ENCODE measurements at regions of chr14 and their contacts with region 1.

Region 1: DNA sequence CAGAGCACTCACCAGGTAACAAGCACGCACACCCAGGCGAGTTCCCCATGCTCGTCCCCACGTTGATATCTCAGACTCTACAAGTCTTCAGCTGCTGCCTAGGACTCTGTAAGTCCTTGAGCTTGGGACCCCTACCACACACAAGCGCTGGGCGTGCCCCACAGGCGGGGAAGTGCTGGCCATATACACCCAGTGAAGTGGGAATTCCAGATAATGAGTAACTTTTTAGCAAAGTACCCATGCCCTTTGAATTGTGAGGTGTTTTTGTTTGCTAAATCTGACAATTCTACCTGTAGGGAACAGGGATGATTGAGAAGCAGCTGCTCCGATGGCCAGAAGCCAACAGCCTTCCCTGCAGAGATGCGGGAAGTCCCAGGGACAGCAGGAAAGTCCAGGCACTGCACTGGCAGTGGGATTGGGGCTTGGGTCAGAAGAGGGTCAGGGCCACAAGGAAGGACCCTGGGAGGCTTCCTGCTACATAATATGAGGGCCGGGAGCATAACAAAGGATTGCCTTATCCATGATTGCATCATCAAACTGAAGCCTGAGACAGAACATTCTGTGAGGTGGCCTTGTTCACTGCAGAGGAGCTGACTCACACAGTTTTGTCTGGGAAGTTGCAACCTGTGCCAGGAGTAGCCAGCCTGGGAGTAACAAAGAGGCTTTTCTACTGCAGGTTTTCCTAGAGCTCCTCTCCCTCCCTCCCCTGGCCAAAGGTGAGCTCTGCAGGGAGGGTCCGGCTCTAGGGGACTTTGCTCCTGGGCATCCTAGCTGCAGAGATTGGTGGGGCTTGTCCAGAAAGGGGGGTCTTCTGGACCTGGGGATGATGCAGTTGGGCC is 13.2 kb upstream of the SERPINA3 start:
- DNase-seq: peak; percentile 100
- ATAC-seq: peak; percentile 77
- H3K4me3 ChIP-seq: peak overlapping the region; percentile 52 to 68 (median 56)
- H3K27ac ChIP-seq: peak overlapping the region; percentile 96
- H3K4me1 ChIP-seq: peaks cover 97% of the 10 kb centered on the region
- H3K27me3 ChIP-seq: no peaks in the 10 kb centered on the region
- CTCF ChIP-seq: peak; percentile 42
- EP300 ChIP-seq: peak; percentile 95 to 99
- POLR2A ChIP-seq: peak; percentile 53 to 65
- RAD21 ChIP-seq: peak; percentile 49

Region 2: GRCh38 chr14:94394581-94395207 is 204.3 kb before region 1 on chr14:
- CTCF ChIA-PET with region 1: no interaction called
- POLR2A ChIA-PET with region 1: interaction called, 26 read pairs
- in situ Hi-C with region 1: no loop called
- intact Hi-C with region 1: no loop called
- DNase-seq: peak; percentile 74
- ATAC-seq: peak; percentile 6; the same call in 2 of the 3 replicates
- H3K4me3 ChIP-seq: peak overlapping the region; percentile 28 to 67 (median 35)
- H3K27ac ChIP-seq: peak overlapping the region; percentile 87
- H3K4me1 ChIP-seq: peaks cover 100% of the 10 kb centered on the region
- H3K27me3 ChIP-seq: no peaks in the 10 kb centered on the region
- CTCF ChIP-seq: no peak
- EP300 ChIP-seq: peak in 1 of 2 experiments; percentile 71; a peak in 2 of 4 replicates
- POLR2A ChIP-seq: peak in 1 of 2 experiments; percentile 55; a peak in 1 of 4 replicates
- RAD21 ChIP-seq: no peak

Region 3: DNA sequence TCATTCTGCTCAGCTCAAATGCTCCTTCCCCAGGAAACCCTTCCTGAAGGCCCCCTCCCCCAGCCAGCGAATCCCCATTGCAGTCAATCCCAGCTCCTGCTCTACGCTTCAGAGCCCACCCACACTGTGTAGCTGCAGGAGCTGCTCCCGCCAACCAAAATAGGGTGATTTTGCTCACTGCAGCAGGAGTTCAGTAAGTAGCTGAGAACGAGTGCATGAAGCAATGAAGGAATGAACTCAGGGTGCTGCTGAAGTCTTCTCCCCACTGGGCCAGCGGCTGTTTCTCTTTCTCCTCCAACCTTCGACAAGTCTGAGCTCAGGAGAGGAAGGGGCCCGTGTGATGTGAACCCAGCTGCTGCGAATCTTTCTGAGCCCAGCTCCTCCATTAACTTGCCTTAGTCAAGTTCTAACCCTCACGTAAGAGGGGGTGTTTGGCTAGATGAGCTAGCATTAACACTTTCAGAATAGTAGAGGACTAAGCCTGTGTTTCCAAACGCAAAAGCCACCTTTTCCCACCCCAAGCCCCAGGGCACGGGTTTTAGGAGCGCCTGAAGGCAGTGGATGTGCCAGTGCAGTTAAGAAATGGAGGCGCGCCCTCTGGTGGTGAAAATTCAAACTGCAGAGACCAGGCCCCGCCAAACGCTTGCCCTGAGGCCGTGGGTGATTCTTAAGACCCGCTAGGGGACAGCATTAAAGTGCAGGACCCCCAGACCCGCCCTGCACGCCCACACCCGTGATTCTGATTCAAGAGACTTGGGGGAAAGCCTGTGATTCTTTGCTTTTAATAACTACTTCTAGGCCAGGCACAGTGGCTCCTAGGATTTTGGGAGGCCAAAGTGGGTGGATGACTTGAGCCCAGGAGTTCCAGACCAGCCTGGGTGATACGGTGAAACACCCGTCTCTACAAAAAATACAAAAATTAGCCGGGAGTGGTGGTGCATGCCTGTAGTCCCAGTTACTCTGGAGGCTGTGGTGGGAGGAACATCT is 49.7 kb before region 1 on chr14:
- CTCF ChIA-PET with region 1: interaction called, 5 read pairs
- POLR2A ChIA-PET with region 1: interaction called, 14 read pairs
- in situ Hi-C with region 1: no loop called
- intact Hi-C with region 1: loop called (anchors 2 kb)
- DNase-seq: peak; percentile 56
- ATAC-seq: peak; percentile 88
- H3K4me3 ChIP-seq: peak overlapping the region; percentile 20 to 58 (median 20); a peak in 4 of 6 replicates
- H3K27ac ChIP-seq: no peak overlapping the region
- H3K4me1 ChIP-seq: peaks cover 73% of the 10 kb centered on the region
- H3K27me3 ChIP-seq: no peaks in the 10 kb centered on the region
- CTCF ChIP-seq: peak; percentile 90
- EP300 ChIP-seq: no peak
- POLR2A ChIP-seq: no peak
- RAD21 ChIP-seq: peak; percentile 84

Region 4: GRCh38 chr14:94571950-94572349 is 27.1 kb before region 1 on chr14:
- CTCF ChIA-PET with region 1: no interaction called
- POLR2A ChIA-PET with region 1: interaction called, 142 read pairs
- in situ Hi-C with region 1: no loop called
- intact Hi-C with region 1: no loop called
- DNase-seq: peak; percentile 37
- ATAC-seq: peak; percentile 7; the same call in 2 of the 3 replicates
- H3K4me3 ChIP-seq: no peak overlapping the region
- H3K27ac ChIP-seq: peak overlapping the region; percentile 94
- H3K4me1 ChIP-seq: peaks cover 89% of the 10 kb centered on the region
- H3K27me3 ChIP-seq: no peaks in the 10 kb centered on the region
- CTCF ChIP-seq: no peak
- EP300 ChIP-seq: no peak
- POLR2A ChIP-seq: no peak
- RAD21 ChIP-seq: no peak

Region 5: GRCh38 chr14:94612174-94612573 is 13.1 kb after region 1 on chr14 and contains the start of gene SERPINA3:
- CTCF ChIA-PET with region 1: no interaction called
- POLR2A ChIA-PET with region 1: interaction called, 638 read pairs
- in situ Hi-C with region 1: no loop called
- intact Hi-C with region 1: loop called (anchors 1 kb)
- DNase-seq: peak; percentile 91
- ATAC-seq: peak; percentile 76
- H3K4me3 ChIP-seq: peak within 1 kb of the TSS; percentile 62 to 69 (median 68)
- H3K27ac ChIP-seq: peak within 1 kb of the TSS; percentile 77
- H3K4me1 ChIP-seq: peaks cover 77% of the 10 kb centered on the region
- H3K27me3 ChIP-seq: no peaks in the 10 kb centered on the region; a peak in 1 of 5 replicates
- CTCF ChIP-seq: no peak
- EP300 ChIP-seq: peak in 1 of 2 experiments; percentile 73; a peak in 2 of 4 replicates
- POLR2A ChIP-seq: peak; percentile 72 to 98
- RAD21 ChIP-seq: no peak
- total RNA-seq, gene SERPINA3: 433 and 825 TPM in 2 replicates

Region 6: DNA sequence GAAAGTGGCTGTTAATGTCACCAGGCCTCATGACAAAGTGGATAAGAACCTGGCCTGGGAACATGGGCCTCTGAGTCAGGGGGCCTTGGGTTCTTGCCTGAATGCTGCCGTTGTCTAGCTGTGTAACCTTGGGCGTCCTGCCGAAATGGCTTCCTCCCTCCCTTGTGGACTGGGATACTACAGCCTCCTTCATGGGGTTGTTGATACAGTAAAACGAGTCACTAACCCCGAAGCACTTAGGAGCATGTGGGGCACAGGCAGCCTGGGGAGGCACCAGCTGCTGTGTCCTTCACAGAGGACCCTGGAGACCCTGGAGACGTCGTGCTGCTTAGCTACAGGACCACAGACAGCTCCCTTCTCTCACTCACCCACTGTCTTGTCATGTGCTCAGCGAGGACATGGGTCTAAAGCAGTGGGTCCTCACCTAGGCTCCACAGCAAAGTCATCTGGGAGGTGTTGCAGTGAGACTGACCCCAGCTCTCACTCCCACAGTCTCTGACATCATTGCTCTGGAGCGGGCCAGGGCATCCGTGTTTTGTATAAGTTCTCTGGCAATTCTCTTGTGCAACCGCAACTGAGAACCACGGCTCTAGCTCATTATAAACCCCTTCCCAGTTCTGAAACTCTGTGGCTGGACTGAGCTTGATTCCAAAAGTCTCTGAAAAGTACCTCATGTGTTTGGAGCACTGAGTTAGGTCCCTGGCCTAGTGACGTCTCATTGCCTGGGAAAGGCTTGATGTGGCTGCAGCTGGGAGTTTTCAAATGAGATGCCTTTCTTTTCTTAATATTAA is 55.2 kb after region 1 on chr14:
- CTCF ChIA-PET with region 1: no interaction called
- POLR2A ChIA-PET with region 1: interaction called, 10 read pairs
- in situ Hi-C with region 1: no loop called
- intact Hi-C with region 1: no loop called
- DNase-seq: peak; percentile 74
- ATAC-seq: peak; percentile 86
- H3K4me3 ChIP-seq: peak overlapping the region in 1 of 3 experiments; percentile 41; a peak in 2 of 6 replicates
- H3K27ac ChIP-seq: no peak overlapping the region
- H3K4me1 ChIP-seq: peaks cover 52% of the 10 kb centered on the region
- H3K27me3 ChIP-seq: peaks cover 0 to 2% of the 10 kb centered on the region in 2 experiments; a peak in 1 of 5 replicates
- CTCF ChIP-seq: no peak
- EP300 ChIP-seq: no peak
- POLR2A ChIP-seq: no peak
- RAD21 ChIP-seq: no peak

Region 7: GRCh38 chr14:95291859-95292542 is 693.0 kb after region 1 on chr14:
- CTCF ChIA-PET with region 1: no interaction called
- POLR2A ChIA-PET with region 1: no interaction called
- in situ Hi-C with region 1: no loop called
- intact Hi-C with region 1: no loop called
- DNase-seq: no peak
- ATAC-seq: no peak
- H3K4me3 ChIP-seq: no peak overlapping the region
- H3K27ac ChIP-seq: no peak overlapping the region
- H3K4me1 ChIP-seq: peaks cover 58% of the 10 kb centered on the region
- H3K27me3 ChIP-seq: no peaks in the 10 kb centered on the region
- CTCF ChIP-seq: no peak
- EP300 ChIP-seq: no peak
- POLR2A ChIP-seq: no peak
- RAD21 ChIP-seq: no peak